ENCODE measurements at regions of chr11 and their contacts with region 1.

Region 1: DNA sequence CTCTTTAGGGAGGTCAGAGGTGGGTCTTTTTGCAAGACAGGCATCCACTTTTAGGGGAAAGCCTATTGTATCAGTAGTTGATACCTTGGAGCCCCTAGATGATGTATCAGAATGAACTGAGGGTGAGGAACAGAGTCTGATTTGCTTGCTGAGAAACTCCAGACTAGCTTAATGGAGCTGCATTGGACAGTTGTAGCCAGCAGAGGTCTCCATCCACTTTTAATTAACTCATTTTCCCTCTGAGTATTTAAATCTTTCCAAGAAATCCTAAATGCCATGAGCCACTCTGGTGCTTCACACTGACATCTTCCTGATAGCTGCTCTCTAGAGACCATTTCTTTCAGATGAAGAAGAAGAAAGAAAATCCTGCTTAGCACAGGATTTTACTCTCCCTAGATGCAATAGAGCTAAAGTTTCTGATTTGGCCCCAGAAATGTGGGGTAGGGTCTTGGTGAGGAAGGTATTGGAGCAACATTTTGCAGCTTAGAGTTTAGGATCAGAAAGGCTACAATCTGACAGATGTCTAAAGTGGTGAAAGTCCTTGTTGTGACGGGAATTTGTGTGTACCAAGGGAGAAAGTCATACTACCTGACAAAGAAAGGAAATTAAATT is 38.0 kb downstream of the EXT2 start:
- DNase-seq: no peak
- ATAC-seq: peak; percentile 49 to 75 (median 58)
- H3K4me3 ChIP-seq: no peak overlapping the region
- H3K27ac ChIP-seq: no peak overlapping the region
- H3K4me1 ChIP-seq: peaks cover 15% of the 10 kb centered on the region
- H3K27me3 ChIP-seq: no peaks in the 10 kb centered on the region
- CTCF ChIP-seq: peak; percentile 65

Region 2: DNA sequence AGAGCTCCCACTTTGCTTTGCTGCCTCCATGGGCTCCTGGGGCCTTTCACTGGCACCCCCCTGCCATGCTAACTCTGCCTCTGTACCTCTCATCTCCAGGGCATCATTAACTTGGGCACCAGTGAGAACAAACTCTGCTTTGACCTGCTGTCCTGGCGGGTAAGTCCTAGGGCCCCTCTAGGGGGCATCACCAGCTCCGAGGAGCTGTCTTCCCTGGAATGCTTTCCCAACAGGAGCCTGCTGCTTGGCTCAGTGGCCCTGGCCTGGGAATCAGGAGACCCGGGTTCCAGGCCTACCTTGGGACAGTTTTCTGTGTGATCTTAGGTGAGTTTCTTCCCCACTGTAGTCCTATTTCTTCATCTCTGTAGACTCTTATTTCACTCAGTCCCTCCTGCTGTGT is 62.3 kb before region 1 on chr11:
- intact Hi-C with region 1: no loop called
- DNase-seq: no peak
- ATAC-seq: no peak
- H3K4me3 ChIP-seq: no peak overlapping the region
- H3K27ac ChIP-seq: no peak overlapping the region
- H3K4me1 ChIP-seq: peaks cover 5% of the 10 kb centered on the region
- H3K27me3 ChIP-seq: no peaks in the 10 kb centered on the region
- CTCF ChIP-seq: no peak

Region 3: DNA sequence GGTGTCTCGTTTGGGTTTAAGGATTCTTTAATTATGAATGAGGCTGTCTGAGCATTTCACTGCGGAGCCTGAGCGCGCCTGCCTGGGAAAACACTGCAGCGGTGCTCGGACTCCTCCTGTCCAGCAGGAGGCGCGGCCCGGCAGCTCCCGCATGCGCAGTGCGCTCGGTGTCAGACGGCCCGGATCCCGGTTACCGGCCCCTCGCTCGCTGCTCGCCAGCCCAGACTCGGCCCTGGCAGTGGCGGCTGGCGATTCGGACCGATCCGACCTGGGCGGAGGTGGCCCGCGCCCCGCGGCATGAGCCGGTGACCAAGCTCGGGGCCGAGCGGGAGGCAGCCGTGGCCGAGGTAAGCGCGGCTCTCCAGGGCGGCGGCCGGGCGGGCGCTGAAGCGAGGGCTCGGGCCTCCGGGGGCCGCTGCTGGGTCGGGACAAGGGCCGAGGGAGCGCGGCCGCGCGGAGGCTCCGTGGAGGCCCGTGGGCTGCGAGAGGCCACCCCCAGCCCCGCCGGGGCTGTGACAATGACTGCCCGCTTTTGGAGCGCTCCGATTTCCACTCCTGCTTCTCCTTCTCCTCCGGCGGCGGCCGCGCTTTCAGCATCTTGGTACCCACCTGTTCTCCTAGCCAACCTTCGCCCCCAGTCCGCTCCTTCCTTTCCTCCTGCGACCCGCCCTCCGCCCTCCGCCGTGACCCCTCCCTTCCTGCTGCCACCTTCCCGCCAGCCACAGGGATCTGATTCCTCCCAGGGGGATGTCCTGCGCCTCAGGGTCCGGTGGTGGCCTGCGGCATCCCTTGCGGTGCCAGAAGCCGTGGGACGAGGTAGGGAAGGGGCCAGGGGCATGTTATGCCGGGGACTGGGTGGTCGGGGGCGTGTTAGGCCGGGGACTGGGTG is 37.7 kb before region 1 on chr11 and contains the start of gene EXT2:
- intact Hi-C with region 1: loop called in 1 of 2 experiments (anchors 5 kb)
- DNase-seq: peak; percentile 89 to 95
- ATAC-seq: peak; percentile 98 to 99 (median 98)
- H3K4me3 ChIP-seq: peak within 1 kb of the TSS; percentile 95
- H3K27ac ChIP-seq: peak within 1 kb of the TSS; percentile 85
- H3K4me1 ChIP-seq: peaks cover 21% of the 10 kb centered on the region
- H3K27me3 ChIP-seq: no peaks in the 10 kb centered on the region
- CTCF ChIP-seq: peak; percentile 88
- total RNA-seq, gene EXT2: 21.4 to 23.5 (median 21.6) TPM

Region 4: DNA sequence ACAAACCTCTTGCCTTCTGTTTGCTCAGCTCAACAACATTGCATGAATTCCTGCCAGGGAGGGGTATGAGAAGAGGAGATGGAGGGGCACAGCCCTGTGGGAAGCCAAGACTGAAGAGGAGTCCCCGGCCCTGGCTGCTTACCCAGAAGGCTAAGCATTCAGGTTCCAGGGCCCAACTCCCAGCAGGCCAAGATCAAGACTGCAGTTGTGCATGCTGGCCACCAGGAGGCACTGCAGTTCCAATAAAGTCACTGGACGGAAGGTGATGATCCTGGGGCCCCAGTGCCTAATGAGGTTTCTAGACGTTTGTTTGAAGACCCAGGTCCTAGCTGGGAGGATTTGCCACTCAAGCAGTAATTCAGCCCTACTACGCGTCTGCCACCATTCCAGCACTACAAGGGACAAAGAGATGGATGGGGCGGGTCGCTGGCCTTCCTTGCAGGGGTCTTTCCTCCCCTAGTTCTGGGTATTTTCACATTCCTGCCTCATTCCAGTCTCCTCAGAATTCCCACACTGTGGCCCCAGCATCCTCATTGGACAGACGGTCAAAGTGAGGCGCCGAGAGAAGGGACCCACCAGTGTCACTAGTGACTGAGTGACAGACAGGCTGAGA is 152.9 kb after region 1 on chr11:
- intact Hi-C with region 1: loop called in 1 of 2 experiments (anchors 10 kb)
- DNase-seq: peak; percentile 32 to 70
- ATAC-seq: peak; percentile 44 to 71 (median 66)
- H3K4me3 ChIP-seq: no peak overlapping the region
- H3K27ac ChIP-seq: no peak overlapping the region
- H3K4me1 ChIP-seq: no peaks in the 10 kb centered on the region
- H3K27me3 ChIP-seq: peaks cover 0 to 10% (median 0%) of the 10 kb centered on the region in 3 donors
- CTCF ChIP-seq: peak; percentile 93

Region 5: GRCh38 chr11:44538375-44539054 is 405.1 kb after region 1 on chr11:
- intact Hi-C with region 1: loop called (anchors 10 kb)
- DNase-seq: peak; percentile 70 to 87
- ATAC-seq: peak; percentile 95 to 99 (median 96)
- H3K4me3 ChIP-seq: no peak overlapping the region
- H3K27ac ChIP-seq: no peak overlapping the region
- H3K4me1 ChIP-seq: no peaks in the 10 kb centered on the region
- H3K27me3 ChIP-seq: peaks cover 0 to 7% (median 0%) of the 10 kb centered on the region in 3 donors
- CTCF ChIP-seq: peak; percentile 96